ENCODE measurements at regions of chr10 and their contacts with region 1.

Region 1: DNA sequence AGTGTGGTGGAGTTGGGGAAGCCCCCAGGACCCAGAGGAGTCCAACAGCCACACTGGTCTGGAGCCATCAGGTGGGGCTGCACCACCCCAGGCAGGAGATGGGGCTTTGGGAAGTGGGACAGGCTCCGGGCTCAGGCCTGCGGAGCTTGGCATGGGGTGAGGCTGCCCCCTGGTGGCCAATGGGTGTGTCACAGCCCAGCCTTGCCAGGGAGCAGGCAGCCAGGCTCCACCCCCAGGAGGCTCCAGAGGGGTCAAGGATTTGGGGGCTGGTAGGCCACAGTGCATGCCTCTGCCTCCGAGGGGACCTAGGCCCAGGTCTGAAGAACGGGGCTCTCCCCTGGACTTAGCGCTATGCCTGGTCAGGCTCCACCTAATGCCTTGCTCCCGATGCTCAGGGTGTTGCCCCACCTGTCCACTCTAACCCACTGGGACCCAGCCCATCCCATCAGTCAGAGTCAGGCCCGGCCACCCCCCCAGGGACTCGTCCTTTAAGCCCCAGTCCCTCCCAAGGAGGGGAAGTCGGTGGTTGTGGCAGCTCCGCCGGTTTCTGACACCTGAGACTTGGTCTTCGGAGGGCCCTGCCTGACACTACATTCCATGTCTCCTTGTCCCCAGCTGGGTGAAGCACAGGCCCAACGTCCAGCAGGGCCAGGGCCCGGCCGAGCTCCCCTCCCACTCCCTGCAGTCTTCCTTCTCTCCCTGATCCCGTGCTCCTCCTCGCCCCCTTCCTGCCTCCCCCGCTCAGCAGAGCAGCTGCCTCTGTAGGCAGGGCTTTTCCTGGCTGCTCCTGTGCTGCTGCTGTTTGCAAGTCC is 11.3 kb upstream of the SAMD8 start:
- DNase-seq: peak; percentile 84
- H3K4me3 ChIP-seq: no peak overlapping the region
- H3K27ac ChIP-seq: no peak overlapping the region
- H3K4me1 ChIP-seq: peaks cover 0 to 3% (median 0%) of the 10 kb centered on the region in 4 donors
- H3K27me3 ChIP-seq: no peaks in the 10 kb centered on the region
- CTCF ChIP-seq: peak; percentile 97 to 99 (median 98)
- EP300 ChIP-seq: no peak
- POLR2A ChIP-seq: no peak

Region 2: GRCh38 chr10:74244097-74244685 is 856.0 kb before region 1 on chr10:
- in situ Hi-C with region 1: loop called in 1 of 4 experiments (anchors 10 kb)
- intact Hi-C with region 1: no loop called
- DNase-seq: no peak
- H3K4me3 ChIP-seq: no peak overlapping the region
- H3K27ac ChIP-seq: no peak overlapping the region
- H3K4me1 ChIP-seq: no peaks in the 10 kb centered on the region
- H3K27me3 ChIP-seq: no peaks in the 10 kb centered on the region
- CTCF ChIP-seq: peak; percentile 47 to 58 (median 50)
- EP300 ChIP-seq: no peak
- POLR2A ChIP-seq: no peak

Region 3: DNA sequence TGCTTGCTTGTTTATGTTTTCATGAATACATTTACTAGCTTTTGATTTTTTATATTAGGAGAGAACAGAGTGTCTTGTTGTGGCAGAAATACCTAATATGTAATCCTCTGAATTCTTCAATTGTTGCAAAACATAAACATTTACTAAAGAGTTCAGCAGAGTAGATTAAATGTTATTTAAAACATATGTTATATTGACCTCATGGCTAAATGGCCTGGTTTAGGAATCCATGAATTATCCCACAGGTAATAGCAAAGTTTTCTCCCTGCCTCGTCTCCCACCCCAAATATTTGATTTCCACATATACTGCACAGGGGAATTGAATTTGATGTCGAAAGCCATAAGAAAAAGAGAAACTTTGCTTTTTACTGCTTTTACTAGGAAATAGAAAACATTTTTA is 837.3 kb before region 1 on chr10:
- in situ Hi-C with region 1: loop called in 3 of 4 experiments (anchors 10 kb)
- intact Hi-C with region 1: loop called (anchors 2 kb)
- DNase-seq: no peak
- H3K4me3 ChIP-seq: no peak overlapping the region
- H3K27ac ChIP-seq: no peak overlapping the region
- H3K4me1 ChIP-seq: peaks cover 0 to 5% (median 2%) of the 10 kb centered on the region in 4 donors
- H3K27me3 ChIP-seq: no peaks in the 10 kb centered on the region
- CTCF ChIP-seq: no peak
- EP300 ChIP-seq: no peak
- POLR2A ChIP-seq: no peak

Region 4: DNA sequence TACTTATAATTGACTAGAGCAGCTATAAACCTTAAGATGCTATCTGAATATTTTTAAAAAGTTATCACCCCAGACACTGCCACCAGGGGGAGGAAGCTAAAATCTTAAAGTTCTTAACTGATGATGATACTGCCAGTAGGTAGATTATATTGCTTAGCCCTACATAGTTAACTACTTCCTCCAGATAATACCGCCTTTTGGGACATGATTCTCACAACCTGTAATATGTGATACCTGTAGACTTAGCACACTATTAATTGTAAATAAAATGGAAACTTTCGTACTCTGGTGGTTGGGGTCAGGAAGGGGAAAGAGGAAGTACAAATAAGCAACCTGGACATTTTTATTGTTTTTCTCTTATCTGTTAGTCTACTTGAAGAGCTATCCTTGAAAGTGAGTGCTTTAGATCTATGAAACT is 680.2 kb before region 1 on chr10:
- in situ Hi-C with region 1: no loop called
- intact Hi-C with region 1: loop called (anchors 2 kb)
- DNase-seq: peak; percentile 16
- H3K4me3 ChIP-seq: no peak overlapping the region
- H3K27ac ChIP-seq: no peak overlapping the region
- H3K4me1 ChIP-seq: no peaks in the 10 kb centered on the region
- H3K27me3 ChIP-seq: no peaks in the 10 kb centered on the region
- CTCF ChIP-seq: peak; percentile 44 to 48 (median 45)
- EP300 ChIP-seq: no peak
- POLR2A ChIP-seq: no peak

Measured in transverse colon (tissue), 4 donors.